MCF 10A (cell line): ENCODE measurements at regions of chr2 and their contacts with region 1.

Region 1: GRCh38 chr2:54206596-54206995 is 49.4 kb downstream of the TSPYL6 start:
- DNase-seq: peak; percentile 55
- H3K4me3 Mint-ChIP-seq: no peak overlapping the region
- H3K27ac Mint-ChIP-seq: no peak overlapping the region
- H3K4me1 Mint-ChIP-seq: peaks cover 14% of the 10 kb centered on the region
- H3K27me3 Mint-ChIP-seq: no peaks in the 10 kb centered on the region
- CTCF ChIP-seq: peak; percentile 50

Region 2: GRCh38 chr2:54454548-54455130 is 248.0 kb after region 1 on chr2:
- CTCF ChIA-PET with region 1: no interaction called
- POLR2A ChIA-PET with region 1: no interaction called
- intact Hi-C with region 1: no loop called
- DNase-seq: no peak
- H3K4me3 Mint-ChIP-seq: peak overlapping the region; percentile 31
- H3K27ac Mint-ChIP-seq: no peak overlapping the region
- H3K4me1 Mint-ChIP-seq: no peaks in the 10 kb centered on the region
- H3K27me3 Mint-ChIP-seq: no peaks in the 10 kb centered on the region
- CTCF ChIP-seq: no peak

Region 3: DNA sequence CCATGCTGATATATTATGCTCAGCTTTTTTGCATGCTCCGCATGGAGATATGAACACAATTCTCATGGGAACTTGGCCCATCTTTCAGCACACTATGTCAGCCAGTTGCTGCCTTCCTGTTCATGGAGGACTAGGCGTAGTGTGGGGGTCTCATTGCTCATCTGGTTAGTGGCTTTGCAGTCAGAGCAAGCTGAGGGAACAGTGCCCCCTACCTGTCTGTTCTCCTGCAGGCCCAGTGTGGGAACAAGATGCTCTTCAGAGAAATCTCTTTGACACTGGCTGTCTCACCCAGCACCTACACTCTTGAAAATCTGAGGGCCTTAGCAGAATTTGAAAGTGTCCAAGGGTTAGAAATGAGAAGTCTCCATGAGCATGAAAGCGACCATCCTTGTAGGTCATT is 296.6 kb after region 1 on chr2:
- CTCF ChIA-PET with region 1: no interaction called
- POLR2A ChIA-PET with region 1: no interaction called
- intact Hi-C with region 1: loop called (anchors 1 kb)
- DNase-seq: peak; percentile 38
- H3K4me3 Mint-ChIP-seq: no peak overlapping the region
- H3K27ac Mint-ChIP-seq: no peak overlapping the region
- H3K4me1 Mint-ChIP-seq: no peaks in the 10 kb centered on the region
- H3K27me3 Mint-ChIP-seq: no peaks in the 10 kb centered on the region
- CTCF ChIP-seq: peak; percentile 50